ENCODE measurements at regions of chr3 and their contacts with region 1.

Region 1: GRCh38 chr3:32583708-32584107 is 13.1 kb upstream of the DYNC1LI1 start:
- DNase-seq: no peak
- ATAC-seq: no peak
- H3K4me3 ChIP-seq: no peak overlapping the region
- H3K27ac ChIP-seq: no peak overlapping the region
- H3K4me1 ChIP-seq: no peaks in the 10 kb centered on the region
- H3K27me3 ChIP-seq: no peaks in the 10 kb centered on the region
- CTCF ChIP-seq: no peak

Region 2: GRCh38 chr3:32570421-32571191 is 13.1 kb before region 1 on chr3 and contains the start of gene DYNC1LI1:
- CTCF ChIA-PET with region 1: no interaction called
- POLR2A ChIA-PET with region 1: no interaction called
- intact Hi-C with region 1: no loop called
- DNase-seq: peak; percentile 95
- ATAC-seq: peak; percentile 88
- H3K4me3 ChIP-seq: peak within 1 kb of the TSS; percentile 82
- H3K27ac ChIP-seq: peak within 1 kb of the TSS; percentile 80
- H3K4me1 ChIP-seq: peaks cover 24% of the 10 kb centered on the region
- H3K27me3 ChIP-seq: no peaks in the 10 kb centered on the region
- CTCF ChIP-seq: no peak
- total RNA-seq, gene DYNC1LI1: 44.2 and 55.6 TPM in 2 replicates

Region 3: GRCh38 chr3:32614956-32615355 is 31.2 kb after region 1 on chr3:
- CTCF ChIA-PET with region 1: no interaction called
- POLR2A ChIA-PET with region 1: no interaction called
- intact Hi-C with region 1: loop called (anchors 5 kb)
- DNase-seq: peak; percentile 84
- ATAC-seq: peak; percentile 99
- H3K4me3 ChIP-seq: no peak overlapping the region
- H3K27ac ChIP-seq: peak overlapping the region; percentile 62
- H3K4me1 ChIP-seq: peaks cover 27% of the 10 kb centered on the region
- H3K27me3 ChIP-seq: no peaks in the 10 kb centered on the region
- CTCF ChIP-seq: no peak

Measured in PC-3 (cell line).